Lower leg skin (tissue), 4 donors: ENCODE measurements at regions of chr18 and their contacts with region 1.

Region 1: GRCh38 chr18:23735021-23735464 is 45.8 kb downstream of the LAMA3 start:
- DNase-seq: no peak
- H3K4me3 ChIP-seq: no peak overlapping the region
- CTCF ChIP-seq: no peak
- POLR2A ChIP-seq: no peak

Region 2: DNA sequence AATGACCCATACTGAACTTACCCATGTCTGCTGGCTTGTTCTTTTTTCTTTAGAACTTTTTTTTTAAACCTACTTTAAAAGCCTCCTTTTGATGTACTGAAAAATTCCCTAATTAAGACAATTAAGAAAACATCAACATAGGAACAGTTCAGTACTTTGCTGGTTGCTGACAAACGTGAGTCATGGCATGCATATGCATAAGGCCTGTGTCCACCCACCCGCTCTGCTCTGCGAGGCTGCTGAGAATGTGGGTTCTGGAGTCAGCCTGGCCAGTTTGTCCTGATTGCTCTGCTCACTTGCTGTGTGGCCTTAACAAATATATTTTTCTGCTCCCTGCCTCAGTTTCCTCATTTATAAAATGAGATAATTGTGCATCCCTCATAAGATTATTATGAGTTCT is 18.5 kb before region 1 on chr18:
- intact Hi-C with region 1: loop called (anchors 1 kb)
- DNase-seq: peak in 1 of 2 donors; percentile 53
- H3K4me3 ChIP-seq: no peak overlapping the region
- CTCF ChIP-seq: no peak
- POLR2A ChIP-seq: no peak